ENCODE measurements at regions of chr3 and their contacts with region 1.

Region 1: GRCh38 chr3:46558184-46559043 is 7.7 kb downstream of the LRRC2 start:
- DNase-seq: peak; percentile 84
- ATAC-seq: peak; percentile 100
- H3K4me3 Mint-ChIP-seq: peak overlapping the region; percentile 77
- H3K27ac Mint-ChIP-seq: peak overlapping the region; percentile 63
- H3K4me1 Mint-ChIP-seq: peaks cover 26% of the 10 kb centered on the region
- H3K27me3 Mint-ChIP-seq: peaks cover 44% of the 10 kb centered on the region

Region 2: GRCh38 chr3:46297658-46298463 is 260.6 kb before region 1 on chr3:
- CTCF ChIA-PET with region 1: no interaction called
- POLR2A ChIA-PET with region 1: no interaction called
- DNase-seq: no peak
- ATAC-seq: no peak
- H3K4me3 Mint-ChIP-seq: no peak overlapping the region
- H3K27ac Mint-ChIP-seq: peak overlapping the region; percentile 92
- H3K4me1 Mint-ChIP-seq: peaks cover 93% of the 10 kb centered on the region
- H3K27me3 Mint-ChIP-seq: no peaks in the 10 kb centered on the region

Region 3: GRCh38 chr3:46482632-46483350 is 75.6 kb before region 1 on chr3:
- CTCF ChIA-PET with region 1: interaction called, 223 read pairs
- POLR2A ChIA-PET with region 1: no interaction called
- DNase-seq: no peak
- ATAC-seq: no peak
- H3K4me3 Mint-ChIP-seq: no peak overlapping the region
- H3K27ac Mint-ChIP-seq: no peak overlapping the region
- H3K4me1 Mint-ChIP-seq: no peaks in the 10 kb centered on the region
- H3K27me3 Mint-ChIP-seq: peaks cover 27% of the 10 kb centered on the region

Region 4: DNA sequence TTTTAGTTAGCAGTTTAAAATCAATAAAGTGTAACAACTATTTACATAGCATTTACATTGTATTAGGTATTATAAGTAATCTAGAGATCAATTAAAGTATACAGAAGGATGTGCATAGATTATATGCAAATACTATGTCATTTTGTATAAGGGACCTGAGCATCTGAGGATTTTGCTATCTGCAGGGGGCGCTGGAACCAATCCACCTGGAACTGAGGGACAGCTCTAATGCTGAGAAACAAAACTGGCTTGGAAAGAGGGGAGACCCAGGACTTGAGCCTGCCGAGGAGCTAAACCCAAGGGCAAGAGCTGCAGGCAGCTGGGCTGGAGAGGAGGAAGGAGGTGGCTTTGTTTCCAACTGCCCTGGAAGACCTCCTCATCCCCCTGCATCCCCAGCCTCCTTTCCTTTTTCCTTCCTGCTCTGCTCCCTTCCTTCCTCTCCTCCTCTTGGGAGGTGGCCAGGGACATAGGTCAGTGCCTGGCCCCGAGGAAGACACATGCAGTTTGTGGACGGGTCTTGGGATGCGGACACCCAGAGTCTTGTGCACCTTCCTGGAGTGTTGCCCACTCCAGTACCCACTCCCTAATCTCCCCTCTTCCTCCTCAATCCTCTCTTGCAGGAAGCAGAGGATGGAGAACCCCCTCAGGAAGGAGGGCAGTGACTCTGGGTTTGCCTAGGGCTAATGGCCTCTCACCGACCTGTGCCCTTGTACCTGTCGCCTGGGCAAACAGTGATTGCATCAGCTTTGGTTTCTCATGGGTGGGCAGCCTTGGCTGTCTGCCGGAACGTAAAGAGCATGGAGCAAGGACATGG is 61.5 kb before region 1 on chr3:
- CTCF ChIA-PET with region 1: interaction called, 223 read pairs
- POLR2A ChIA-PET with region 1: no interaction called
- DNase-seq: peak; percentile 64
- ATAC-seq: no peak
- H3K4me3 Mint-ChIP-seq: no peak overlapping the region
- H3K27ac Mint-ChIP-seq: no peak overlapping the region
- H3K4me1 Mint-ChIP-seq: peaks cover 2% of the 10 kb centered on the region
- H3K27me3 Mint-ChIP-seq: no peaks in the 10 kb centered on the region

Region 5: GRCh38 chr3:46538803-46539442 is 19.5 kb before region 1 on chr3:
- CTCF ChIA-PET with region 1: interaction called, 33 read pairs
- POLR2A ChIA-PET with region 1: no interaction called
- DNase-seq: peak; percentile 93
- ATAC-seq: peak; percentile 97
- H3K4me3 Mint-ChIP-seq: peak overlapping the region; percentile 66
- H3K27ac Mint-ChIP-seq: peak overlapping the region; percentile 89
- H3K4me1 Mint-ChIP-seq: peaks cover 61% of the 10 kb centered on the region
- H3K27me3 Mint-ChIP-seq: peaks cover 11% of the 10 kb centered on the region